Dorsolateral prefrontal cortex (tissue), 120 donors: ENCODE measurements at regions of chr5 and their contacts with region 1.

Region 1: GRCh38 chr5:93034621-93035590 is 546.1 kb downstream of the NR2F1-AS1 start:
- DNase-seq: no peak
- H3K4me3 ChIP-seq: no peak overlapping the region
- H3K27ac ChIP-seq: no peak overlapping the region
- H3K27me3 ChIP-seq: no peaks in the 10 kb centered on the region
- CTCF ChIP-seq: no peak

Region 2: GRCh38 chr5:92444888-92445287 is 590.0 kb before region 1 on chr5:
- intact Hi-C with region 1: no loop called
- DNase-seq: no peak
- H3K4me3 ChIP-seq: no peak overlapping the region
- H3K27ac ChIP-seq: peak overlapping the region in 16 of 59 donors; percentile 1 to 61 (median 11)
- H3K27me3 ChIP-seq: no peaks in the 10 kb centered on the region
- CTCF ChIP-seq: no peak

Region 3: GRCh38 chr5:92574023-92574422 is 460.9 kb before region 1 on chr5:
- intact Hi-C with region 1: no loop called
- DNase-seq: no peak
- H3K4me3 ChIP-seq: no peak overlapping the region
- H3K27ac ChIP-seq: no peak overlapping the region
- H3K27me3 ChIP-seq: no peaks in the 10 kb centered on the region
- CTCF ChIP-seq: no peak

Region 4: DNA sequence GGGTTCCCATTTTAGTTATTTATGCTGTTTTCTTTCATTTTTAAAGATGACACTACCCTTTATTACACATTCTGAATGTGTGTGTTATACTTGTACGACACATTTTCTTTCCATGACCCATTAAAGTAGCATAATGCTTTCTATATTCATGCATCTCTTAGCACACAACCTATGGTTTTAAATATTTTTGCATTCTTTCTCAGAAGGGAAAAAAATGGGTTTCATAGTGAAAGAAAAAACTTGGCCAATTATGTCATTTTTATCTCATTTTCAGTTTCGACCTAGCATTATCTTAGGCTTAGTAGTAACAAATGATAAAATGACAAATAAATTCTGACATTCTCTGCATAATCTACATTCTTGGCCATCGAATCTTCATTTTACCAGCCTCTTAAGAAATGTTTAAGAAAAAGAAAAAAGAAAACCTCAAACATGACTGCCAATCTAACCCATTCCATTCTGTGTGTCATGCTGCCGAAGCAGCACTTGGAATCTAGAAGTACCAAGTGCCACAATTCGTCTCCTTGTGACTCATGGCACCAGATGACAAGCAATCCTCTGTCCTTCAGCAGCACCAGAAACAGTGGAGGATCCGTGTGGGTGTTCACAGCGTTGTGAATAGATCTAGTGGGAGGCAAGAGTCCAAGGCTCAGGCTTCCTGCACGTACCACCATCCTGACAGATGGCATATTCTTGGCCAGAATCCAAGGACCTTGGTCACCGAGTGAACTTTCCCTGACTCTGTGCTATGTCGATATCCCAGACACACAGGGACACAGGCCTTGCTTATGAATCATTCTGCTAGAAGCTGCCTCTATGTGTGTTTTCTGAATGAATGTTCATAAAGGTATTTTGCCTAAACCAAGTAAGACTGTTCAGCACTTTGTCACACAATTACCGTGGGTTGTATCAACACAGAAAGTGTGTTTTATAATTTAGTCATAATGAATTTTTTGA is 43.5 kb after region 1 on chr5:
- intact Hi-C with region 1: loop called in 1 of 2 experiments (anchors 5 kb)
- DNase-seq: peak; percentile 20 to 86 (median 66)
- H3K4me3 ChIP-seq: peak overlapping the region in 30 of 59 donors; percentile 1 to 41 (median 17)
- H3K27ac ChIP-seq: peak overlapping the region in 51 of 59 donors; percentile 4 to 80 (median 48)
- H3K27me3 ChIP-seq: no peaks in the 10 kb centered on the region
- CTCF ChIP-seq: no peak

Region 5: DNA sequence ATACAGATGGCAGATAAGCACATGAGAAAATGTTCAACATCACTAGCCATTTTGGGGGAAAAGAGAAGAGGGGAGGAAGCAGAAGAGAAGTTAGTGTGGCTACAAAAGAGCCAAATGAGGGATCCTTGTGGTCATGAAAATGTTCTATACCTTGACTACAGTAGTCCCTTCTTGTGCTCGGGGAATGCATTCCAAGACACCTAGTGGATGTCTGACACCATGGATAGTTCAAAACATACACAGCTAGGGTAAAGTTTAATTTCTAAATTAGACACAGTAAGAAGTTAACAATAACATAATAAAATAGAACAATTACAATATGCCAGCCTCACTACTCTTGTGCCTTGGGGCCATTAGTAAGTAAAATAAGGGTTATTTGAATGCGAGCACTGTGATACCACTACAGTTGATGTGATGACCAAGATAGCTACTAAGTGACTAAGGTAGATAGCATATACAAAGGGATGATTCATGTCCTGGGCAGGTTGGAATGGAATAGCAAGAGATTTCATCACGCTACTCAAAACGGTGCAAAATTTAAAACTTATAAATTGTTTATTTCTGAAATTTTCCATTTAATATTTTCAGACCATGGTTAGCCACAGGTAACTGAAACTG is 202.0 kb after region 1 on chr5:
- intact Hi-C with region 1: no loop called
- DNase-seq: no peak
- H3K4me3 ChIP-seq: no peak overlapping the region
- H3K27ac ChIP-seq: no peak overlapping the region
- H3K27me3 ChIP-seq: no peaks in the 10 kb centered on the region
- CTCF ChIP-seq: no peak

Region 6: DNA sequence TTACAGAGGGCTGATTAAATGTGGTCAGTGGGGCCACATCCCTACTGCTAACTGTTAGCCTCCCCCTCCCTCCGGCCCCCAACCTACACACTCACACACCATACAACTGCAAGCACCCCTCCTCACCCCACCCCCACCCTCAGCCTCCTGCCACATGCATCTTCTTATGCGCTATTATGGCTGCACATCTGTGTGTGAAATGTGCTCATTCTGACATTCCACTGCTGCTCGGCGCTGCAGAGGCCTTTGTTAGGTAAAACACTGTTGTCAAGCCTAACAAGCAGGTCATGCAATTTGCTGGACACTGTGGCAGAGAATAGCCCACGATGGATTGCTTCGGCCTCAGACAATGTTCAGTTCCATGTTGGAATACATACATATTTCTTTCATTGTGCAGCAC is 372.5 kb after region 1 on chr5:
- intact Hi-C with region 1: no loop called
- DNase-seq: no peak
- H3K4me3 ChIP-seq: no peak overlapping the region
- H3K27ac ChIP-seq: peak overlapping the region in 1 of 59 donors; percentile 24
- H3K27me3 ChIP-seq: peaks cover 0 to 4% (median 0%) of the 10 kb centered on the region in 45 donors
- CTCF ChIP-seq: no peak